Sciatic nerve (tissue), 2 donors: ENCODE measurements at regions of chr7 and their contacts with region 1.

Region 1: DNA sequence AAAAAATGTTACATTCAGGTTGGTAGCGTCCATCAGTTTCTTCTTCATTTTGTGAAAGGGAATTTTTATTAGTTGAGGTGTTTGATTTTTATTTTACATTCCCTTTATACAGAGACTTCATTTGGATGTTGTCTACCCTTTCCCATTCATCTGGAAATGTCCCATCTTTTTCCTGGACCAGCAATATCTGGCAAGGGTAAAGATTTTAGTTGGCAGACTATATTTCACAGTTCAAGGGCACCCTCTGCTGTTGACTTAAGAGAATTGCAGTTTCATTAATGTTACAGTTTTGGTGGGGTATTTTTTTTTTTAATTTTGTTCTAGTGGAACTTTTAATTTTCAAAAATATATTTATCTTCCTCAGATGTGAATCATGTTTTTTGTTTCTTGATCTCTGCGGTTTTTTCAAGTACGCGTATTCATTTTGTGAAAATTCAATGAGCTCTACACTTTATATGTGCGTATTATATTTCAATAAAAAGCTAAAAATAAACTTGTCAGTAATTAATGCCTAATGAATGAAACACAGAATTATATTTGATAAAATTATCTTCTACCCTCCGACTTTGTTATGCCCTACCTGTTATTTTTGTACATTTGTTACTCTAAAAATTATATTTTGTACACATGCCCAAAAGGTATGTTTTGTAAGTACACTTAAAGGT is 97.9 kb upstream of the KLF14 start:
- DNase-seq: no peak
- ATAC-seq: peak; percentile 75

Region 2: DNA sequence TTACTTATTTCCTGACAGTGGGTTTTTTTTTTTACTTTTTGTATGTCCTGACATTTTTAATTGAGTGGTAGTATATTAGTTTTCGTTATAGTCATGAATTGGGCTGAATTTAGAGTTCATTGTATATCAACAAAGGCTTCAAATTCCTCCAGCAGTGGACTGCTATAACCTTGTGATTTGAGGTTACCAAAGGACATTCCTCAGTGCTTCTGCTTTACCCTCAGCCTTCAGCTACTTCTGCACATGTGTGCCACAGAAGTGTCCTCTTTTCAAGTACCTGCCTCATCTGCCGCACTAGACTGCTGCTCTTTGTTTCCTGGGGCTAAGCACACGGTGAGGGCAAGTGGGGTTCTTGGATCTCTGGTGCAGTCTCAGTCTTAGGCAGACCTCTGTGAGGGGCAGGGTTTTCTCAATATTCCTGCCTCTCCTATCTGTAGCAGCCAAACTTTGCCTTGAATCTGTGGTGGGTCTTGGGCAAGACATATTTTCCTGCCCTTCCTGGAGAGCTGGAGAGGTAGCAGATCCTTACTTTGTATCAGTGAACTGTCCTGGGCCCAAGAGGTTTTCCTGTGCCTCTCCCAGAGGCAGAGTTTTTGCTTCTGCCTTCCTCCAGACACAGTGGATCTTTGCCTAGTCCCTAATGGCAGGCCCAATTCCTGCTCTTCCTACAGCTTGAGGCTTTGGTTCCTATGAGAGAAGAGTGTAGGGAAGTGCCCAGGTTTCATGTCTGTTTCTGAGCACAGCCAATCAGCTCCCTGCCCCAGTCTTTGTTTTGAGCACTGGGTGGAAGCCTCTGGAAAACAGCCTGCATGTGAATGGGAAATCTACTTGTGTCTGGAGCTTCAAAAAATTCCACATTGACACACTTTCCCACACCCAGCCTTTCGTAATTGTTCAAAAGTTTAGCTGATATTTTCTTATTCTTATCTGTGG is 1436.7 kb before region 1 on chr7:
- intact Hi-C with region 1: loop called (anchors 10 kb)
- DNase-seq: no peak
- ATAC-seq: no peak

Region 3: GRCh38 chr7:130996841-130997231 is 164.9 kb after region 1 on chr7:
- intact Hi-C with region 1: no loop called
- DNase-seq: no peak
- ATAC-seq: peak; percentile 16

Region 4: DNA sequence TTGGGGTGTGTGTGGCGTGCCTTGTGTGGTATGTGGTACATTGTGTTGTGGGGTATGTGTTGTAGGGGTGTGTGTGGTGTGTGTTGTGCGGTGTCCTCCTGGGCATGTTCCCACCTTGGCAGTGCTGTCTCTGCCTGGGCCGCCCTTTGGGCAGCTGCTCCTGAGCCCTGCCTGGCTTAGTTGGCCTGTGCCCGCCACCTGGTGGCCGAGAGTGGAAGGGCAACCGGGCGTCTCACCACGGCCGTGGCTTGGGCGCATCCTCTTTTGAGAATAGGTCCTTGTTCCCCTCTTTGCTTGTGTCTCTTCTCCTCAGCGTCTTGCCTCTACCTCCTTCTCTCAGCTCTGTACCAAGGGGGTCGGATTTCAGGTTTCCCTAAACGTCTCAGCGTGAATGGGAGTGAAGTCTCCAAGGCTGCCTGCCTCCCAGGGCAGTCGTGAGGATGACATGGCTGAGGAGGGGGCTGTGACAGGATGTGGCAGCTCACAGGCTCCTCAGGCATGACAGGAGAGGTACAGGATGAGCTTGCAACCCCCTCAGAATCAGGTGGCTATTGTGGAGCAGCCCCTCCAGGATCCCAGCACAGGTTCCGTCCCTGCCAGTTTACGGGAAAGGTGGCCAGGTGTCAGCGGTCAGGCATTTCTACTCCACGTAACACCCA is 822.8 kb after region 1 on chr7:
- intact Hi-C with region 1: no loop called
- DNase-seq: peak; percentile 94
- ATAC-seq: peak; percentile 91